Heart left ventricle (tissue), 16 donors: ENCODE measurements at regions of chr7 and their contacts with region 1.

Region 1: DNA sequence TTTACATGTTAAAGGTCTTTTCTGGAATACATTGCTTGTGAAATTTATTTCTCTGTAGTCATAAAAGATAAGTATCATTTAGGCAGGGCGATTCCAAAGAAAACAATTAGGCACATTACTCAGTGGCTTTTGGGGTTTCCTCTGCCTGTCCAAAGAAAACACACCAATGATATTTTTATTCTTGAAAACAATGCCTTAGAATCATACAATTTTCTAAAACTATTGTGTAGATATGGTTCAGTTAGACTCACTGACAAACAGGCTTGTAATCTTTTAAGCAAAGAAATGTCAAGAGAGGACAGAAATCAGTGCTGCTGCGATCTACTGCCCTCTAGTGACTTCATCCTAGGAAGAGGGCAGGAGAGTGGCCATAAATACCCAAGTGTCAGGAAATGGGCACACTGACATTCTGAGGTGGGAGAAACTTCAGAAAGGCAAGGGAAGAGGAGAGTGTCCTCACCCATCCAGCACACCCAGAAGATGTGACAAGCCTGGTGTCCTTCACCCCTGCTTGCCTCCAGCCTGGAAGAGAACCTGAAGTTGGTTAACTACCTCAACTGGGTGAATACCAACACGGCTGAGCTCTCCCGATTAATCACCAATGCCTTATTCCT is 120.5 kb downstream of the GALNT11 start:
- DNase-seq: no peak
- ATAC-seq: peak; percentile 32 to 71 (median 68)
- H3K4me3 ChIP-seq: no peak overlapping the region
- H3K27ac ChIP-seq: peak overlapping the region in 2 of 12 donors; percentile 44 to 50
- H3K4me1 ChIP-seq: peaks cover 0 to 42% (median 16%) of the 10 kb centered on the region in 12 donors
- H3K27me3 ChIP-seq: no peaks in the 10 kb centered on the region
- CTCF ChIP-seq: peak; percentile 45 to 70 (median 59)
- POLR2A ChIP-seq: no peak

Region 2: DNA sequence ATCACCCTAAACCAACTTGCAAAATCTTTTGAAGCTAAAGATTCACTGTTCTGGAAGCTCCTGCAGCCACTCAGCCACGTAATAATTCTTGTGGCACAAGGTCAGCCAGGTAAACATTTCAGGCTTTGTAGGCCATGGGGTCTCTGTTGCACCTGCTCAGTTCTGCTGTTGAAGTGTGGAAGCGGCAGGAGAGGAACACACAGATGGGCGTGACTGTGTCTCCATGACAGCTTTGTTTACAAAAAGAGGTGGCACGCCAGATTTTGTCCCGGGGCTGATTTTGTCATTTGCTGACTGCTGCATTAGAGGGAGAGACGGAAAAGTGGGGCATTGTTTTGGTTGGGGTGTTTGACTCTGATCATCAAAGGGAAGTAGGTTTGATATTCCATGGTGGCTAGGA is 372.2 kb before region 1 on chr7:
- intact Hi-C with region 1: loop called in 1 of 10 experiments (anchors 10 kb)
- DNase-seq: peak in 1 of 5 donors; percentile 9
- ATAC-seq: no peak
- H3K4me3 ChIP-seq: no peak overlapping the region
- H3K27ac ChIP-seq: no peak overlapping the region
- H3K4me1 ChIP-seq: no peaks in the 10 kb centered on the region
- H3K27me3 ChIP-seq: no peaks in the 10 kb centered on the region
- CTCF ChIP-seq: no peak
- POLR2A ChIP-seq: no peak

Region 3: DNA sequence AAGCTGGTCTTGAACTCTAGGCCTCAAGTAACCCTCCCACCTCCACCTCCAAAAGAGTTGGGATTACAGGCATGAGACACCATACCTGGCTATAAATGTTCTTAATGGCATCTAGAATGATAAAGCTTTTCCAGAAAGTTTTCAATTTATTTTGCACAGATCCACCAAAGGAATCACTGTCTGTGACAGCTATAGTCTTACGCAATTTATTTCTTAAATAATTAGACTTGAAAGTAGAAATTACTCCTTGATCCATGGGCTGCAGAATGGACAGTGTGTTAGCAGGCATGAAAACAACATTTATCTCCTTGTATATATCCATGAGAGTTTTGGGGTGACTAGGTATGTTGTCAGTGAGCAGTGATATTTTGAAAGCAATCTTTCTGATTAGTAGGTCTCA is 86.6 kb before region 1 on chr7:
- intact Hi-C with region 1: no loop called
- DNase-seq: no peak
- ATAC-seq: no peak
- H3K4me3 ChIP-seq: no peak overlapping the region
- H3K27ac ChIP-seq: no peak overlapping the region
- H3K4me1 ChIP-seq: peaks cover 0 to 28% (median 7%) of the 10 kb centered on the region in 12 donors
- H3K27me3 ChIP-seq: no peaks in the 10 kb centered on the region
- CTCF ChIP-seq: no peak
- POLR2A ChIP-seq: no peak

Region 4: GRCh38 chr7:152108359-152108758 is 37.6 kb before region 1 on chr7:
- intact Hi-C with region 1: no loop called
- DNase-seq: no peak
- ATAC-seq: peak; percentile 80 to 94 (median 87)
- H3K4me3 ChIP-seq: no peak overlapping the region
- H3K27ac ChIP-seq: peak overlapping the region in 1 of 12 donors; percentile 19
- H3K4me1 ChIP-seq: peaks cover 0 to 3% (median 0%) of the 10 kb centered on the region in 12 donors
- H3K27me3 ChIP-seq: no peaks in the 10 kb centered on the region
- CTCF ChIP-seq: peak in 4 of 12 donors; percentile 7 to 25 (median 16)
- POLR2A ChIP-seq: no peak

Region 5: DNA sequence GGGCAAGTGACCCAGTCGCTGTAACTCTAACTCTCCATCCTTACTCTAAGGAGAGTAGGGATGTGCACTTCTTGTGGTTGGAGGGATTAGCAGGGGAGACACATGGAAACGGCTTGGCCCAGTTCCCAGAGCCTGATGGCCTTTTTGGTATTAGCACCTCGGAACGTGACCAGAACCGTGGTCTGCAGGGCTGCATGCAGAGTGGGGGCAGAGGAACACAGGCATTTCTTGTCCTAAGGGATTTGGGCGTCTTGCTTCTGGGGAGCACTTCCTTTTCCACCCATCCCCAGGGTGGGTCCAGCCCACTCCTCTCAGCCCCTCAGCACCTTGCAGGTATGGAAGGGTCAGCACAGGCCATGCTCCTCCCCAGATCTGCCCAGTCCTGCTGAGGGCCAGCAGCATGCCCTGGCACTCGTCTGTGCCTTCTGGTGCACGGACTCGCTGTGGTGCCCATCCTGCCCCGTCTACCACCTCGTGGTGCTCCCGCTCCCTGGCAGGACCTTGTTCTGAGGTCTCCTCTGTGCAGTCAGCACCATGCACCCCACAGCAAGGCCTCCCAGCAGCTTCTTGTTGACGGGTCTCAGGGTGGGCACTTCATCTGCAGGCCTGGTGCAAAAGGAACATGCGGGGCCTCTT is 723.2 kb after region 1 on chr7:
- intact Hi-C with region 1: no loop called
- DNase-seq: no peak
- ATAC-seq: no peak
- H3K4me3 ChIP-seq: no peak overlapping the region
- H3K27ac ChIP-seq: no peak overlapping the region
- H3K4me1 ChIP-seq: no peaks in the 10 kb centered on the region
- H3K27me3 ChIP-seq: no peaks in the 10 kb centered on the region
- CTCF ChIP-seq: no peak
- POLR2A ChIP-seq: no peak